Lower lobe of right lung (tissue), 2 donors: ENCODE measurements at regions of chr3 and their contacts with region 1.

Region 1: GRCh38 chr3:154766765-154767503 is 313.2 kb upstream of the MME start:
- DNase-seq: no peak
- ATAC-seq: peak in 1 of 2 donors; percentile 9
- H3K4me3 ChIP-seq: no peak overlapping the region
- H3K27ac ChIP-seq: no peak overlapping the region
- H3K4me1 ChIP-seq: no peaks in the 10 kb centered on the region
- H3K27me3 ChIP-seq: no peaks in the 10 kb centered on the region
- CTCF ChIP-seq: no peak

Region 2: GRCh38 chr3:155323063-155323666 is 556.2 kb after region 1 on chr3:
- intact Hi-C with region 1: loop called (anchors 10 kb)
- DNase-seq: no peak
- ATAC-seq: peak; percentile 78 to 81
- H3K4me3 ChIP-seq: no peak overlapping the region
- H3K27ac ChIP-seq: no peak overlapping the region
- H3K4me1 ChIP-seq: no peaks in the 10 kb centered on the region
- H3K27me3 ChIP-seq: no peaks in the 10 kb centered on the region
- CTCF ChIP-seq: peak; percentile 64